ENCODE measurements at regions of chr11 and their contacts with region 1.

Region 1: GRCh38 chr11:6596239-6596877 is 7.1 kb downstream of the RRP8 start:
- DNase-seq: no peak
- ATAC-seq: no peak
- H3K4me3 ChIP-seq: no peak overlapping the region
- H3K4me1 ChIP-seq: no peaks in the 10 kb centered on the region
- CTCF ChIP-seq: no peak

Region 2: GRCh38 chr11:6389921-6390724 is 206.2 kb before region 1 on chr11 and contains the start of gene SMPD1:
- intact Hi-C with region 1: no loop called
- DNase-seq: peak; percentile 95 to 98 (median 96)
- ATAC-seq: peak; percentile 96
- H3K4me3 ChIP-seq: peak within 1 kb of the TSS; percentile 45
- H3K4me1 ChIP-seq: peaks cover 17% of the 10 kb centered on the region
- CTCF ChIP-seq: no peak
- total RNA-seq, gene SMPD1: 45.3 to 86.6 (median 62.0) TPM

Region 3: GRCh38 chr11:6544921-6545850 is 51.2 kb before region 1 on chr11:
- intact Hi-C with region 1: loop called in 1 of 2 experiments (anchors 10 kb)
- DNase-seq: no peak
- ATAC-seq: peak; percentile 13
- H3K4me3 ChIP-seq: no peak overlapping the region
- H3K4me1 ChIP-seq: no peaks in the 10 kb centered on the region
- CTCF ChIP-seq: no peak